MCF 10A (cell line): ENCODE measurements at regions of chr6 and their contacts with region 1.

Region 1: GRCh38 chr6:26045065-26045927 is 41.9 kb upstream of the HFE start:
- DNase-seq: peak; percentile 95
- H3K4me3 Mint-ChIP-seq: peak overlapping the region; percentile 80
- H3K27ac Mint-ChIP-seq: peak overlapping the region; percentile 86
- H3K4me1 Mint-ChIP-seq: peaks cover 16% of the 10 kb centered on the region
- H3K27me3 Mint-ChIP-seq: no peaks in the 10 kb centered on the region
- CTCF ChIP-seq: no peak

Region 2: DNA sequence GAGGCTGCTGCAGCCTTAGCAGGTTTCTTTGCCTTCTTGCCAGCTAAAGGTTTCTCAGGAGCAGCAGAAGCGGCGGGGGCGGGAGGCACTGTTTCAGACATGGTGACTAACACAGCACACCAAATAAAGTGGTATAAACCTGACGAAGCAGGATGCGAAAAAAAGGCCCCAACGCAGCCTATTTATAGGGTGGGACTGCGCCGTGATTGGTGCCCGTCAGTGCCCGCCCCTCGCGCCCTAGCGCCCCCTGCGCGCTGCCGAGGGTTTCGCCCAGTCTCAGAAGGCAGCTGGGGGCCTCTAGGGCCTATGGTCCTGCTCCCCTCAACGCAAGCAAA is 27.7 kb before region 1 on chr6:
- CTCF ChIA-PET with region 1: interaction called, 3 read pairs
- POLR2A ChIA-PET with region 1: interaction called, 1,354 read pairs
- intact Hi-C with region 1: no loop called
- DNase-seq: peak; percentile 93
- H3K4me3 Mint-ChIP-seq: peak overlapping the region; percentile 75
- H3K27ac Mint-ChIP-seq: peak overlapping the region; percentile 73
- H3K4me1 Mint-ChIP-seq: no peaks in the 10 kb centered on the region
- H3K27me3 Mint-ChIP-seq: no peaks in the 10 kb centered on the region
- CTCF ChIP-seq: peak; percentile 26

Region 3: GRCh38 chr6:26087284-26088115 is 42.2 kb after region 1 on chr6 and contains the start of gene HFE:
- CTCF ChIA-PET with region 1: interaction called, 4 read pairs
- POLR2A ChIA-PET with region 1: interaction called, 15 read pairs
- intact Hi-C with region 1: no loop called
- DNase-seq: peak; percentile 53
- H3K4me3 Mint-ChIP-seq: peak within 1 kb of the TSS; percentile 88
- H3K27ac Mint-ChIP-seq: peak within 1 kb of the TSS; percentile 92
- H3K4me1 Mint-ChIP-seq: peaks cover 10% of the 10 kb centered on the region
- H3K27me3 Mint-ChIP-seq: no peaks in the 10 kb centered on the region
- CTCF ChIP-seq: no peak
- total RNA-seq, gene HFE: 2.8 and 5.2 TPM in 2 replicates

Region 4: DNA sequence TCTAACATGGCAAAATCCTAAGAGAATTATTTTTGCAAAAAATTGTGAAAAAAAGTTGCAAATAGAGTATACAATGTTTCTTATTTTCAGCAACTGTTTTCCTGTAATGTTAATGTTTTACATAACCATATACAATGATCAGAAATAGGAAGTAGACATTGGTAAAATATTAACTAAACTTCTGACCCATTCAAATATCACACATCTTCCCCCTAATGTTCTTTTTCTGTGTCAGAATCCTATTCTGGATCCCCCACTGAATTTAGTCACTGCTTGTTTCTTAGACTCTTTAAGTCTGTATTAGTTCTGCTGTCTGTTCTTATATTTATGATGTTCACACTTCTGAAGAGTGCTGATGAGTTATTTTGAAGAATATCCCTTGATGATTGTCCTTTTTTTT is 103.9 kb after region 1 on chr6:
- CTCF ChIA-PET with region 1: no interaction called
- POLR2A ChIA-PET with region 1: no interaction called
- intact Hi-C with region 1: no loop called
- DNase-seq: no peak
- H3K4me3 Mint-ChIP-seq: no peak overlapping the region
- H3K27ac Mint-ChIP-seq: no peak overlapping the region
- H3K4me1 Mint-ChIP-seq: peaks cover 8% of the 10 kb centered on the region
- H3K27me3 Mint-ChIP-seq: no peaks in the 10 kb centered on the region
- CTCF ChIP-seq: no peak

Region 5: GRCh38 chr6:26183581-26184366 is 138.5 kb after region 1 on chr6:
- CTCF ChIA-PET with region 1: no interaction called
- POLR2A ChIA-PET with region 1: interaction called, 18 read pairs
- intact Hi-C with region 1: no loop called
- DNase-seq: peak; percentile 56
- H3K4me3 Mint-ChIP-seq: peak overlapping the region; percentile 79
- H3K27ac Mint-ChIP-seq: peak overlapping the region; percentile 84
- H3K4me1 Mint-ChIP-seq: peaks cover 27% of the 10 kb centered on the region
- H3K27me3 Mint-ChIP-seq: no peaks in the 10 kb centered on the region
- CTCF ChIP-seq: no peak

Region 6: GRCh38 chr6:26657256-26657655 is 612.0 kb after region 1 on chr6:
- CTCF ChIA-PET with region 1: no interaction called
- POLR2A ChIA-PET with region 1: no interaction called
- intact Hi-C with region 1: no loop called
- DNase-seq: no peak
- H3K4me3 Mint-ChIP-seq: no peak overlapping the region
- H3K27ac Mint-ChIP-seq: no peak overlapping the region
- H3K4me1 Mint-ChIP-seq: peaks cover 19% of the 10 kb centered on the region
- H3K27me3 Mint-ChIP-seq: peaks cover 14% of the 10 kb centered on the region
- CTCF ChIP-seq: no peak

Region 7: DNA sequence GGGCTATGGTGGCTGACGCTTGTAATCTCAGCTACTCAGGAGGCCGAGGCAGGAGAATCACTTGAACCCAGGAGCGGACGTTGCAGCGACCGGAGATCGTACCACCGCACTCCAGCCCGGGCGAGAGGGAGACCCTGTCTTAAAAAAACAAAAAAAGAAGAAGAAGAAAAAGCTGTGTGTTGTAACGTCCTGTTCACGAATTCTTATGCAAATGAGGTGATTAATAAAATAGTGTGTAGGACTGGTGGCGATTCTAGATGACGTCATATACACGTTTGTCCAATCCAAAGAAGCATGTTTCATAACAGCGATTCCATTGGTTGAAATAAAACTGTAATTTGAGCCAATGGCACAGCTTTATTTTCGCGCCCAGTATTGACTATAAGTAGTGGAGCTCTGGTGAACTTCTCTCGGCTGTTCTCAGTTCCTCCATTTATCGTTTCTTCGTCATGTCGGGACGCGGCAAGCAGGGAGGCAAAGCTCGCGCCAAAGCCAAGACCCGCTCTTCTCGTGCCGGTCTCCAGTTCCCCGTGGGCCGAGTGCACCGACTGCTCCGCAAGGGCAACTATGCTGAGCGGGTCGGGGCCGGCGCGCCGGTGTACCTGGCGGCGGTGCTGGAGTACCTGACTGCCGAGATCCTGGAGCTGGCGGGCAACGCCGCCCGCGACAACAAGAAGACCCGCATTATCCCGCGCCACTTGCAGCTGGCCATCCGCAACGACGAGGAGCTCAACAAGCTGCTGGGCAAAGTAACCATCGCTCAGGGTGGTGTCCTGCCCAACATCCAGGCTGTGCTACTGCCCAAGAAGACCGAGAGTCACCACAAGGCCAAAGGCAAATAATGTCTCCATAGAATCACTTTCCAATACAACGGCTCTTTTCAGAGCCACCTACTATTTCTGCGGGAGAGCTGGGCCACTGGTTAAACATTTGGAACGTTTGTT is 1819.9 kb after region 1 on chr6:
- CTCF ChIA-PET with region 1: no interaction called
- POLR2A ChIA-PET with region 1: interaction called, 14 read pairs
- intact Hi-C with region 1: no loop called
- DNase-seq: peak; percentile 96
- H3K4me3 Mint-ChIP-seq: peak overlapping the region; percentile 91
- H3K27ac Mint-ChIP-seq: peak overlapping the region; percentile 97
- H3K4me1 Mint-ChIP-seq: no peaks in the 10 kb centered on the region
- H3K27me3 Mint-ChIP-seq: no peaks in the 10 kb centered on the region
- CTCF ChIP-seq: no peak